Motor neuron (in vitro differentiated cells): ENCODE measurements at regions of chr5 and their contacts with region 1.

Region 1: GRCh38 chr5:127564002-127564769 is 46.7 kb downstream of the PRRC1 start:
- ATAC-seq: peak; percentile 60 to 83 (median 74)
- H3K4me3 ChIP-seq: no peak overlapping the region
- H3K27ac ChIP-seq: no peak overlapping the region
- H3K4me1 ChIP-seq: peaks cover 3% of the 10 kb centered on the region in 2 donors

Region 2: GRCh38 chr5:127746756-127747155 is 182.6 kb after region 1 on chr5:
- in situ Hi-C with region 1: loop called in 2 of 9 experiments (anchors 10 to 25 kb)
- ATAC-seq: peak in 1 of 8 experiments; percentile 19
- H3K4me3 ChIP-seq: no peak overlapping the region
- H3K27ac ChIP-seq: no peak overlapping the region
- H3K4me1 ChIP-seq: no peaks in the 10 kb centered on the region

Region 3: GRCh38 chr5:127757576-127757975 is 193.4 kb after region 1 on chr5:
- in situ Hi-C with region 1: loop called in 1 of 9 experiments (anchors 10 kb)
- ATAC-seq: peak; percentile 43 to 89 (median 78)
- H3K4me3 ChIP-seq: no peak overlapping the region
- H3K27ac ChIP-seq: no peak overlapping the region
- H3K4me1 ChIP-seq: peaks cover 6 to 11% of the 10 kb centered on the region in 2 donors

Region 4: DNA sequence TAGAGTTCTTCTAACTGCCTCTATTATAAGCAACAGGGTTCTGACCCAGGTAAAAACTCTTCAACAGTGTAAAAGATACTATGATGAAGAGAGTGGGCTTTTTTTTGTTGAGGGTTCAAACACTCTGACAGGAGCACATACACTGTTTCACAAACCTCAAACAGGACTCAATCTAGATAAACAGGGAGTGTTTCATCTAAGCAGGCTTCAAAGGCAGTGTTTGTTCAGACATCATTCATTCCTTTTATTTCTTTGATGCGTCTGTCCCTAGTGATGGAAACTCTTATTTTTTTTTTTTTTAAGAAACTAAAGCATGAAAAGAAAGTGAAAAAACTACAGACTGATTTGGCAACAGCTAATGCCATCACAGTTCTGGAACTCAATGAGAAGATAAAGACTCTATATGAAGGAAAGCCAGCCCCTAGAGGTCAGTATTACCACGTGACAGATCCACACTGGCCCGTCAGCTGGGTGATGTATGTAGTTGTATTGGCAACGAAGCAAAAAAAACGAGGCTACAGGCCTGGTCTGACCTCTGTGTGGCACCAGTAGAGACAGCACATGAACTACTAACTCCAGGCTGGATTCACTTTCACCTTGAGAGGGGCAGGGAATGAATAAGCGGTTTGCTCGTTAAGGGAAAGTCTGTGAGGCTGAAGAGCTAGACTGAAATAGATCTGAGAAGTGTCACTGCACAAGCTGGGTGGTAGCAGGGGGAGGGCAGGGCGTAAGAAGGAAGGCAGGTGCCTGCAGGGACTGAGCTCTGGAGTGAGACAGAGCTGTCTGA is 311.2 kb after region 1 on chr5:
- in situ Hi-C with region 1: loop called in 3 of 9 experiments (anchors 25 kb)
- ATAC-seq: peak; percentile 65 to 97 (median 94)
- H3K4me3 ChIP-seq: peak overlapping the region in 1 of 5 donors; percentile 4
- H3K27ac ChIP-seq: peak overlapping the region in 1 of 2 donors; percentile 45
- H3K4me1 ChIP-seq: peaks cover 30 to 31% of the 10 kb centered on the region in 2 donors

Region 5: GRCh38 chr5:128844354-128844923 is 1280.3 kb after region 1 on chr5:
- in situ Hi-C with region 1: loop called in 1 of 9 experiments (anchors 25 kb)
- ATAC-seq: no peak
- H3K4me3 ChIP-seq: no peak overlapping the region
- H3K27ac ChIP-seq: no peak overlapping the region
- H3K4me1 ChIP-seq: no peaks in the 10 kb centered on the region